PC-9 (cell line): ENCODE measurements at regions of chr14 and their contacts with region 1.

Region 1: GRCh38 chr14:23057757-23058653 is 685 bp upstream of the CDH24 start:
- DNase-seq: peak; percentile 59 to 86
- H3K4me3 ChIP-seq: peak overlapping the region; percentile 64; the same call in 1 of the 2 replicates
- H3K27ac ChIP-seq: no peak overlapping the region
- H3K4me1 ChIP-seq: peaks cover 25% of the 10 kb centered on the region
- H3K27me3 ChIP-seq: no peaks in the 10 kb centered on the region
- CTCF ChIP-seq: peak; percentile 82

Region 2: GRCh38 chr14:22556990-22557623 is 500.9 kb before region 1 on chr14:
- CTCF ChIA-PET with region 1: no interaction called
- POLR2A ChIA-PET with region 1: no interaction called
- intact Hi-C with region 1: loop called (anchors 2 kb)
- DNase-seq: peak; percentile 44 to 74
- H3K4me3 ChIP-seq: peak overlapping the region; percentile 55; the same call in 1 of the 2 replicates
- H3K27ac ChIP-seq: peak overlapping the region; percentile 87
- H3K4me1 ChIP-seq: peaks cover 38% of the 10 kb centered on the region
- H3K27me3 ChIP-seq: no peaks in the 10 kb centered on the region
- CTCF ChIP-seq: peak; percentile 98

Region 3: GRCh38 chr14:22630486-22630885 is 427.5 kb before region 1 on chr14:
- CTCF ChIA-PET with region 1: no interaction called
- POLR2A ChIA-PET with region 1: no interaction called
- intact Hi-C with region 1: no loop called
- DNase-seq: no peak
- H3K4me3 ChIP-seq: no peak overlapping the region
- H3K27ac ChIP-seq: no peak overlapping the region
- H3K4me1 ChIP-seq: no peaks in the 10 kb centered on the region
- H3K27me3 ChIP-seq: no peaks in the 10 kb centered on the region
- CTCF ChIP-seq: no peak

Region 4: DNA sequence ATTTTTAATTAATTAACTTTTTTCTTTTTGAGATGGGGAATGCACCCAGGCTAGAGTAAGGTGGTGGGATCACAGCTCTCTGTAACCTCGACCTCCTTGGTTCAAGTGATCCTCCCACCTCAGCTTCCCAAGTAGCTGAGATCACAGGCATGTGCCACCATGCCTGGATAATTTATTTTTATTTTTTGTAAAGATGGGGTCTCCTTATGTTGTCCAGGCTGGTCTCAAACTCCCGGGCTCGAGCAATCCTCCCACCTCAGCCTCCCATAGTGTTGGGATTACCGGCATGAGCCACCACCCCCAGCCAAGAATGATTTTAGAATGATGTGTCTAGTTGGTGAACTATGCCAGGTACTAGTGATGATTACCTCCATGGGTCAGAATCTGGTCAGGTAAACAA is 193.0 kb before region 1 on chr14:
- CTCF ChIA-PET with region 1: no interaction called
- POLR2A ChIA-PET with region 1: no interaction called
- intact Hi-C with region 1: no loop called
- DNase-seq: no peak
- H3K4me3 ChIP-seq: no peak overlapping the region
- H3K27ac ChIP-seq: no peak overlapping the region
- H3K4me1 ChIP-seq: peaks cover 6% of the 10 kb centered on the region; the same call in 1 of the 2 replicates
- H3K27me3 ChIP-seq: no peaks in the 10 kb centered on the region
- CTCF ChIP-seq: no peak

Region 5: GRCh38 chr14:22929104-22929847 is 128.7 kb before region 1 on chr14 and contains the start of gene PRMT5:
- CTCF ChIA-PET with region 1: interaction called, 3 read pairs
- POLR2A ChIA-PET with region 1: no interaction called
- intact Hi-C with region 1: loop called (anchors 5 kb)
- DNase-seq: peak; percentile 94 to 98
- H3K4me3 ChIP-seq: peak within 1 kb of the TSS; percentile 85
- H3K27ac ChIP-seq: peak within 1 kb of the TSS; percentile 42
- H3K4me1 ChIP-seq: peaks cover 32% of the 10 kb centered on the region
- H3K27me3 ChIP-seq: no peaks in the 10 kb centered on the region
- CTCF ChIP-seq: no peak
- total RNA-seq, gene PRMT5: 58.6 and 73.2 TPM in 2 replicates

Region 6: DNA sequence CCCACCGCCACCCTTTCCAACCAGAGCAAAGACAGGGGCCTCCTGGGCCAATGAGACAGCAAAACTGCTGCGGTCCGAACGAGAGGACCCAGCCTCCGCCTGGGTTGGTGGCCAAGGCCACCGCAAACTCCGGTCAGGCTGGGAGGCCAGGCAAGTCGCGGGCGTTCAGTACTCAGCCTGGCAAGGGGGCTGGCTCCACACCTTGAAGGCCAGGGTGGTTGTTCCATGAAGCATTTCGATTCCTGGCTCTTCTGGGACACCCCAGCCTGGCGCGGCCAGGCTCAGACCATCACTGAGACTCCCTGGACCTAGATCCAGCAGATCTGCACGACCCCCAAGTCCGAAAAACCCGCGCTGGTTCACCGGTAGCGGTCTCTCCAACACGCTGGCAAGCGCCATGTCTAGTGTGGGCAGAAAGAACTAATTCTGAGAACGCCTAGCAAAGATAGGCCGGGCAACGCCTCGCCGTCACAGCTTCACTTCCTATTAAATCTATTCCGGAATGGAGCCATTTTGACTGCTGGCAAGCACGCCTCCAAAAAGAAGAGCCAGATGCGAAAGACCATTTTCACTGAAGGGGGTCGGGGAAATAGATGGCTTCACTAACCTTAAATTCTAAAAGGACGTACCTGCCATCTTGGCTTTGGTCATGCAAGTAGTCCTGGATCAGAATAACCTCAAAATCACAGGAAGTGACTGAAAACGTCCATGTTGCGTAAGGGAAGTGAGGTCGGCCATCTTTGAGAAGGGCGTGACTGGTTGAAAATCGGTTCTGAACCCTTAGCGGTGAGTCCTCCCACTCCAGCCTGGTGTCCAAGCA is 23.3 kb before region 1 on chr14 and contains the start of gene PSMB5:
- CTCF ChIA-PET with region 1: interaction called, 10 read pairs
- POLR2A ChIA-PET with region 1: no interaction called
- intact Hi-C with region 1: no loop called
- DNase-seq: peak; percentile 74 to 85
- H3K4me3 ChIP-seq: peak within 1 kb of the TSS; percentile 88
- H3K27ac ChIP-seq: peak within 1 kb of the TSS; percentile 96
- H3K4me1 ChIP-seq: peaks cover 9% of the 10 kb centered on the region
- H3K27me3 ChIP-seq: no peaks in the 10 kb centered on the region
- CTCF ChIP-seq: no peak
- total RNA-seq, gene PSMB5: 122 and 146 TPM in 2 replicates

Region 7: GRCh38 chr14:23085458-23085857 is 27.5 kb after region 1 on chr14:
- CTCF ChIA-PET with region 1: no interaction called
- POLR2A ChIA-PET with region 1: no interaction called
- intact Hi-C with region 1: no loop called
- DNase-seq: no peak
- H3K4me3 ChIP-seq: no peak overlapping the region
- H3K27ac ChIP-seq: no peak overlapping the region
- H3K4me1 ChIP-seq: peaks cover 4% of the 10 kb centered on the region; the same call in 1 of the 2 replicates
- H3K27me3 ChIP-seq: no peaks in the 10 kb centered on the region
- CTCF ChIP-seq: no peak